ENCODE measurements at regions of chr2 and their contacts with region 1.

Region 1: DNA sequence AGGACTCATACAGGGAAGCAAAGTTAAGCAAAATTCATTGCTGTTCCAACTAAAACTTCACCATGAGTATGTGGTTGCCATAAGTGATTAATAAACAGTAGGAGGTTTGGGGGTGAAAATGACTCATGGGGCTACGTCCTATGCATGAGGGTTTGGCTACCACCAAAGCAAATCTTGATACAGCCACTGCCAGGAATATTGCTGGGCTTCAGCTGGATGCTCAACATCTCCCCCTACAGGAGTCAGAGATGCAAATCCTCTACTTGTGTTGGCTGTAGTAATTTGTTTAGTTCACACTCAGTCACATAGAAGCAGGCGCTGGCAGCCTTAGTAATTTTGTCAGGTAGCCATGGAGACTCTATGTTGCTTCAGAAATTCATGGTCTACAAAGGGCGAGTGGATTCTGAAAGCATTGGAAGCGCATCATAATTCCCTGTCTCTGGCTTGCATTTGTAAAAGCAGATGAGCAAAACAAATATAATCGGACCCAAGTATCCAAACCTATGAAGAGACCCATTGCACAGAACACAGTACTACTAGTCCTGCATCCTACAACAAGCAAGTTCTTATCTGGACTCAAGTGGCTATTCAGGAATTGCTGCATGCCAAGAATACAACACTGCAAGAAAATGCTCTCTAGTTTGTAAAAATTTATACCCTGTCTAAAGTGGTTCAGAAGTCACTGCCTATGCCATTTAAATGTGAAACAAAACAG is 76.0 kb downstream of the CD28 start:
- DNase-seq: peak; percentile 94
- ATAC-seq: peak; percentile 58
- H3K4me3 ChIP-seq: no peak overlapping the region
- H3K27ac ChIP-seq: no peak overlapping the region
- H3K4me1 ChIP-seq: peaks cover 10% of the 10 kb centered on the region
- H3K27me3 ChIP-seq: no peaks in the 10 kb centered on the region
- CTCF ChIP-seq: peak; percentile 83
- POLR2A ChIP-seq: 0 out of 2 replicates have a peak, but pooled peaks have one; percentile 29
- RAD21 ChIP-seq: peak; percentile 87

Region 2: DNA sequence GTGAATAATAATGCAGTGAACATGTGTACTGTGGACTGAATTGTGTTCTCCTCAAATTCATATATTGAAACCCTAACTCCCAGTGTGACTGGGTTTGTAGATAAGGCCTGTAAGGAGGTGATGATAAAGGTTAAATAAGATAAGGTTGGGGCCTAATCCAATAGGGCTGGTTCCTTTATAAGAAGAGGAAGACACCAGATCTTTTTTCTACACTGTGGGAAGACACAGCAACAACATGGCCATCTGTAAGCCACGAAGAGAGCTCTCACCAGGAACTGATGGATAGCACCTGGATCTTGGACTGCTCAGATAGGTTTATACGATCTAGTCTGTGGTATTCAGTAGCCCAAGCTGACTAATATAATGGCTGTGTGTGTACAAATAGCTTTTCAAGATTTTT is 1339.5 kb before region 1 on chr2:
- CTCF ChIA-PET with region 1: no interaction called
- POLR2A ChIA-PET with region 1: no interaction called
- dilution Hi-C with region 1: no loop called
- in situ Hi-C with region 1: no loop called
- intact Hi-C with region 1: no loop called
- DNase-seq: peak; percentile 52
- ATAC-seq: peak; percentile 40; the same call in 1 of the 2 replicates
- H3K4me3 ChIP-seq: no peak overlapping the region
- H3K27ac ChIP-seq: no peak overlapping the region
- H3K4me1 ChIP-seq: peaks cover 2% of the 10 kb centered on the region; the same call in 1 of the 2 replicates
- H3K27me3 ChIP-seq: no peaks in the 10 kb centered on the region
- CTCF ChIP-seq: no peak
- POLR2A ChIP-seq: no peak
- RAD21 ChIP-seq: no peak

Region 3: DNA sequence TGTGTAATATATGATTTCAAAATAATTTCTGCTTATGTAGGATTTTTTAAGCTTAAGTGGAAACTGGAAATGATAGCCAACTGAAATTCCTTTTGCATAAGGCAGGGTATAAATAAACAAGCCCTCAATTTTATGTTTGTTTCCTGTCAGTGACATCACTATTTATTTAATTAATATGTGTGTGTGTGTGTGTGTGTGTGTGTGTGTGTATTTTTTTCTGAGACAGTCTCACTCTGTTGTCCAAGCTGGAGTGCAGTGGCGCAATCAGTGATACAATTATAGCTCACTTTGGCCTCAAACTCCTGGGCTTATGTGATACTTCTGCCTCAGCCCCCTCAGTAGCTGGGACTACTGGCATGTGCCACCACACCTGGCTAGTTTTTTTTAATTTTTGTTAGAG is 572.9 kb before region 1 on chr2:
- CTCF ChIA-PET with region 1: no interaction called
- POLR2A ChIA-PET with region 1: no interaction called
- dilution Hi-C with region 1: no loop called
- in situ Hi-C with region 1: no loop called
- intact Hi-C with region 1: no loop called
- DNase-seq: peak; percentile 25
- ATAC-seq: peak; percentile 57
- H3K4me3 ChIP-seq: no peak overlapping the region
- H3K27ac ChIP-seq: no peak overlapping the region
- H3K4me1 ChIP-seq: no peaks in the 10 kb centered on the region
- H3K27me3 ChIP-seq: no peaks in the 10 kb centered on the region
- CTCF ChIP-seq: no peak
- POLR2A ChIP-seq: no peak
- RAD21 ChIP-seq: no peak

Region 4: DNA sequence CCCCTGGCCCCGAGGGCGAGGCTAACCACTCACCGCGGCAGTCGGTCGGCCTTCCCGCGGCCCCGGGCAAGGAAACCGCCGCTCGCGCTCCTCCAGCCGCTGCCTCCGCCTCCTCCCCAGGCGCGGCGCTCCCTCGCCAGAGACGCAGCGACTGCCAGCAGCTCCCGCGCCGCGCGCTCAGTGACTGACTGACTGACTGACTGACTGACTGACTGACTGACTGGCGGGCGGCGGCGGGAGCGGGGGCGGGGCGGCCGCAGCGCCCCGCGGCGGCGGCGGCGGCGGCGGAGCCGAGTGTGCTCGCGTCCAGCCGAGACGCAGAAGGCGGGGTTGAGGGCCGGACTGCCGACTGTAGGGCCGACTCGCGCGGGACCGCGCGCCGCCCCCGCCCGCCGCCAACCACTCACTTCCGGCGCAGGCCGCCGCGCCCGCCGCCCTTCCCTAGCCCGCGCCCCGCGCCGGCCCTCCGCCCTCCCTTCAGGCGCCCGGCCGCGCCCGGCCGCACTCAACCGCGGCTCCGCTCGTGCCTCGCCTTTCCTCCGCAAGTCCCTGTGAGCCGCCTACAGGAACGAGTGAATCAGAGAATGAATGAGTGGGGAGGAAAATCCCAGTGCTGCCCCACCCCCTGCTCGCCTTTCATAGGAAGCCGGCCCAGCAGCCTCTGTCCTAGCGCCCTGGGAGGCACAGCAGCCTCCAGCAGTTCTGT is 247.2 kb before region 1 on chr2 and contains the start of gene RAPH1:
- CTCF ChIA-PET with region 1: no interaction called
- POLR2A ChIA-PET with region 1: no interaction called
- dilution Hi-C with region 1: no loop called
- in situ Hi-C with region 1: no loop called
- intact Hi-C with region 1: loop called (anchors 2 kb)
- DNase-seq: peak; percentile 82
- ATAC-seq: peak; percentile 92
- H3K4me3 ChIP-seq: peak within 1 kb of the TSS; percentile 58
- H3K27ac ChIP-seq: peak within 1 kb of the TSS; percentile 90
- H3K4me1 ChIP-seq: no peaks in the 10 kb centered on the region; the same call in 1 of the 2 replicates
- H3K27me3 ChIP-seq: no peaks in the 10 kb centered on the region
- CTCF ChIP-seq: no peak
- POLR2A ChIP-seq: peak; percentile 83
- RAD21 ChIP-seq: no peak; the same call in 1 of the 2 replicates
- total RNA-seq, gene RAPH1: 13.1 and 15.1 TPM in 2 replicates

Region 5: DNA sequence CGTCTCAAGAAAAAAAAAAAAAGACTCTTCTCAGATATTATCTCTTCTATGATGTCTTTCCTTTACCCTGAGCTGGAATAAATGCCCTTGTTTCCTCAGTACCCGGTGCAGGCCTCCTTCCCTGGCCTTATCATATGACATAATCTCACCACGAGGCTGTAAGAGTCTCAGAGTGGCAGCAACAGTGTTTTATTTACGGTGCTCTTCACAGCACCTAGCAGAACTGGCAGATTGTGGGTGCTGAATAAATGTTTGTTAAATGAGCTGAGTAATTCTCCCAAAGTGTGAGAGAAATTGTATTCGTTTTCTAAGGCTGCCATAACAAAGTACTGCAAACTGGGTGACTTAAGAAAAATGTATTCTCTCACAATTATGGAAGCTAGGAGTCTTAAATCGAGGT is 158.8 kb before region 1 on chr2:
- CTCF ChIA-PET with region 1: no interaction called
- POLR2A ChIA-PET with region 1: no interaction called
- dilution Hi-C with region 1: no loop called
- in situ Hi-C with region 1: no loop called
- intact Hi-C with region 1: loop called (anchors 2 kb)
- DNase-seq: peak; percentile 27
- ATAC-seq: no peak
- H3K4me3 ChIP-seq: no peak overlapping the region
- H3K27ac ChIP-seq: peak overlapping the region; percentile 79
- H3K4me1 ChIP-seq: peaks cover 16% of the 10 kb centered on the region
- H3K27me3 ChIP-seq: no peaks in the 10 kb centered on the region
- CTCF ChIP-seq: no peak
- POLR2A ChIP-seq: no peak
- RAD21 ChIP-seq: no peak

Region 6: GRCh38 chr2:203688798-203689197 is 93.6 kb before region 1 on chr2:
- CTCF ChIA-PET with region 1: no interaction called
- POLR2A ChIA-PET with region 1: no interaction called
- dilution Hi-C with region 1: no loop called
- in situ Hi-C with region 1: no loop called
- intact Hi-C with region 1: loop called (anchors 5 kb)
- DNase-seq: peak; percentile 78
- ATAC-seq: peak; percentile 18
- H3K4me3 ChIP-seq: no peak overlapping the region
- H3K27ac ChIP-seq: no peak overlapping the region
- H3K4me1 ChIP-seq: peaks cover 22% of the 10 kb centered on the region
- H3K27me3 ChIP-seq: no peaks in the 10 kb centered on the region
- CTCF ChIP-seq: no peak
- POLR2A ChIP-seq: no peak
- RAD21 ChIP-seq: no peak

Region 7: GRCh38 chr2:203808046-203808750 is 25.8 kb after region 1 on chr2:
- CTCF ChIA-PET with region 1: interaction called, 3 read pairs
- POLR2A ChIA-PET with region 1: no interaction called
- dilution Hi-C with region 1: no loop called
- in situ Hi-C with region 1: no loop called
- intact Hi-C with region 1: loop called (anchors 2 kb)
- DNase-seq: peak; percentile 95
- ATAC-seq: peak; percentile 70
- H3K4me3 ChIP-seq: no peak overlapping the region
- H3K27ac ChIP-seq: peak overlapping the region; percentile 54; the same call in 1 of the 2 replicates
- H3K4me1 ChIP-seq: peaks cover 21% of the 10 kb centered on the region
- H3K27me3 ChIP-seq: no peaks in the 10 kb centered on the region
- CTCF ChIP-seq: no peak
- POLR2A ChIP-seq: no peak; the same call in 1 of the 2 replicates
- RAD21 ChIP-seq: no peak

Measured in IMR-90 (cell line).